MCF 10A (cell line): ENCODE measurements at regions of chr12 and their contacts with region 1.

Region 1: GRCh38 chr12:89179983-89180382 is 172.3 kb downstream of the DUSP6 start:
- DNase-seq: peak; percentile 100
- H3K4me3 Mint-ChIP-seq: peak overlapping the region; percentile 64
- H3K27ac Mint-ChIP-seq: peak overlapping the region; percentile 78
- H3K4me1 Mint-ChIP-seq: peaks cover 41% of the 10 kb centered on the region
- H3K27me3 Mint-ChIP-seq: no peaks in the 10 kb centered on the region
- CTCF ChIP-seq: no peak

Region 2: GRCh38 chr12:88703790-88704189 is 476.2 kb before region 1 on chr12:
- CTCF ChIA-PET with region 1: no interaction called
- POLR2A ChIA-PET with region 1: no interaction called
- intact Hi-C with region 1: no loop called
- DNase-seq: no peak
- H3K4me3 Mint-ChIP-seq: no peak overlapping the region
- H3K27ac Mint-ChIP-seq: no peak overlapping the region
- H3K4me1 Mint-ChIP-seq: peaks cover 22% of the 10 kb centered on the region
- H3K27me3 Mint-ChIP-seq: no peaks in the 10 kb centered on the region
- CTCF ChIP-seq: no peak

Region 3: DNA sequence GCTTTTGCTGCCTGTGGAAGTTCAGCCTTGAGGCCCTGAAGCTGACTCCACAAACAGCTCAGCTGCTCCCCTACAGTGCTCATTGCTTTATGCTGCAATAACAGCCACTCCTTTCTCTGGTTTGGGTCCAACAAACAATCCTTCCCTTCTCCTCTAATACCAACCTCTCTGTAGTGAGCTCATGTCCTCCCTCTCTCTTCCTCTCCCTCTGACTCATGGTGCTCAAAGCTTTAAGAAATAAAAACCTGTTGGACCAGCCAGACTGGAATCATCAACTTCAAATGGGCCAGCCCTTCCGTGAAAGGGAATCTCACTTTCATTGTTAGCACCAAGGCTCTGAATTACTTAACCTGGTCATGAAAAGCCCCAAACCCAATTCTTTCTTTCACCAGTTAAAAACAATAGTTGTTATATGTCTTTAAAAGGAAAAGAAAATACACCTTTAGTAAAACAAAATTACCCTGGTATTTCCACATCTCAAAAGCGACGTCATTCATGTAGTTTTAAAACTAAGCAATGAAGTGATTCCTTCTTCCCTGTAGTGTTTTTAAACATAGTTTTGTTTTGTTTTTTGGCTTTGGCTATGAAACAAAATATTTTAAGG is 45.9 kb after region 1 on chr12:
- CTCF ChIA-PET with region 1: no interaction called
- POLR2A ChIA-PET with region 1: interaction called, 6 read pairs
- intact Hi-C with region 1: loop called (anchors 2 kb)
- DNase-seq: peak; percentile 96
- H3K4me3 Mint-ChIP-seq: peak overlapping the region; percentile 48
- H3K27ac Mint-ChIP-seq: peak overlapping the region; percentile 93
- H3K4me1 Mint-ChIP-seq: peaks cover 30% of the 10 kb centered on the region
- H3K27me3 Mint-ChIP-seq: no peaks in the 10 kb centered on the region
- CTCF ChIP-seq: no peak